PC-9 (cell line): ENCODE measurements at regions of chr12 and their contacts with region 1.

Region 1: DNA sequence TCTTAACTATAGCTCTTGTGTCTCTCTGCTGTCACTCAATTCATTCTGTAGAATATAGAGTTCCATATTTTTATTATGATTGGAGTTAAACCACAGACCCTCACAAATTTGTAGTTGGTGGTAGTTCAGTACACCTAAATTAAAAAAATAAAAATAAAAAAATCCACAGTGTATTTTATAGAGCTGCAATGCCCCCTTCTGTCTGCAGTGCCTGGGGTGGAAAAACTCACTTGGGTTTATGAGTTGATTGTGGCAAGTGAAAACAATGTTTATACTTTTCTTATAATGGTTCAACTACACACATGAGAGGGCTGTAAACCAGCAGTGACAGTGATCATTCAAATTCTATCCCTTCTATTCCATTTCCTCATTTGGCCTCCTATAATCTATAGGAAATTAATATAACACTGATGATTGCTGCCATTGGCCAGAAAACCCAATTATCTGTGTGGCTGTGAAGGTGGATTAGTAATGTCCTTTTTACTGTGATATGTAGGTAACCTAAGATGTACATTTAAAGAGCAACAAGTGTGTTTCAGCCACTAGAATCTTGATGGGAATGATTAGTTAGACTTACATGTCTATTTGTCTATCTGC is 166.9 kb upstream of the LRIG3 start:
- DNase-seq: no peak
- H3K4me3 ChIP-seq: no peak overlapping the region
- H3K27ac ChIP-seq: no peak overlapping the region
- H3K4me1 ChIP-seq: no peaks in the 10 kb centered on the region
- H3K27me3 ChIP-seq: no peaks in the 10 kb centered on the region
- CTCF ChIP-seq: peak; percentile 74

Region 2: DNA sequence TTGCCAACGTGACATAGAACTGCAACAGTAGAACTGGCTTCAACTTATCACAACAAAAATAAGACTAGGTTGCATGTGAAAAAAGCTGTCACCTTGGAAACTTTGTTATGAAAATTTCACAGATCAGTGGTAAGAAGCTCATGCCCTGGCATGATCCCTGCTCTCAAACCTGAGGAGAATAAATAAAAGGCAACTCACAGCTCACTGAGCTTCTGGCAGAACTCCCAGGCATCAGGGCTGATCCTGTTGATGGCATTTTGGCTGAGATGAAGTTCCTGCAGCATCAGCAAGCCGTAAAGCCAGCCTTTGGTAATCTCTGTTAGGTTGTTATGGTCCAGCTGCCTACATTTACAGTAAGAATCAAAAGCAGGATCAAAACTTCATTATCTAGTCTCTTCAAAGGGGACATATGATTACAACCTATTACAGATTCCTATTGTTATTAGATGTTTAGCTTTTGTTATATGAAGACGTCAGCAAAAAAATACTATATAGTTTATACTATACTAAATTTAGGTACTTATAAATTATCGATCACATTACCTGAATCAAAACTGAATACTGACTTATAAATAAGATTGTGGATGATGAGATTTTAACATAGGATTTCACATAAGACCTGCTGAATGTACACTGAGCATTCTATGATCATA is 198.9 kb before region 1 on chr12:
- CTCF ChIA-PET with region 1: no interaction called
- POLR2A ChIA-PET with region 1: no interaction called
- intact Hi-C with region 1: no loop called
- DNase-seq: no peak
- H3K4me3 ChIP-seq: no peak overlapping the region
- H3K27ac ChIP-seq: no peak overlapping the region
- H3K4me1 ChIP-seq: no peaks in the 10 kb centered on the region
- H3K27me3 ChIP-seq: no peaks in the 10 kb centered on the region
- CTCF ChIP-seq: no peak

Region 3: GRCh38 chr12:58920102-58920960 is 166.8 kb before region 1 on chr12 and contains the start of gene LRIG3:
- CTCF ChIA-PET with region 1: no interaction called
- POLR2A ChIA-PET with region 1: no interaction called
- intact Hi-C with region 1: loop called (anchors 10 kb)
- DNase-seq: peak; percentile 72 to 81
- H3K4me3 ChIP-seq: peak within 1 kb of the TSS; percentile 77
- H3K27ac ChIP-seq: peak within 1 kb of the TSS; percentile 5
- H3K4me1 ChIP-seq: peaks cover 44% of the 10 kb centered on the region
- H3K27me3 ChIP-seq: no peaks in the 10 kb centered on the region
- CTCF ChIP-seq: no peak; the same call in 1 of the 2 replicates
- total RNA-seq, gene LRIG3: 8.8 and 10.6 TPM in 2 replicates

Region 4: DNA sequence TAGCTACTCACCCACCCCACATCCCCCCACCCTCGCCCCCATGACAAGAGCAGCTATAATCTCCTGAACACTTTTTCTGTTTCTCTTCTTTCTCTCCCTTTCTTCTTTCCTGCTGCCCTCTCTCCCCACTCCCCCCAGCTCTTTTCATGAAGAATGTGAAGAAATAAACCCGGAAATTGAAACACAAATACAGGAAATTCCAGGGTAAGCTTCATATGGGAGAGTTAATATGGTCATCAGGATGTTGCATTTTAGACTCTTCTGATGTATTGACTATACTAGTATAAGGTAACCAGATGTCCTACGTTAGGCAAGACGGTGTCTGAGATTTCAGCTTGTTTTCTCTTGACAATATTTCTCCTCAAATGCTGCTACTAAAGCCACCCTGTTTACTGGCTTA is 125.3 kb before region 1 on chr12:
- CTCF ChIA-PET with region 1: no interaction called
- POLR2A ChIA-PET with region 1: no interaction called
- intact Hi-C with region 1: no loop called
- DNase-seq: no peak
- H3K4me3 ChIP-seq: no peak overlapping the region
- H3K27ac ChIP-seq: no peak overlapping the region
- H3K4me1 ChIP-seq: no peaks in the 10 kb centered on the region
- H3K27me3 ChIP-seq: no peaks in the 10 kb centered on the region
- CTCF ChIP-seq: no peak